Dorsolateral prefrontal cortex (tissue), 120 donors: ENCODE measurements at regions of chr14 and their contacts with region 1.

Region 1: GRCh38 chr14:81710234-81710845 is 176.7 kb upstream of the SEL1L start:
- DNase-seq: peak in 1 of 10 donors; percentile 19
- H3K4me3 ChIP-seq: no peak overlapping the region
- H3K27ac ChIP-seq: no peak overlapping the region
- H3K27me3 ChIP-seq: peaks cover 0 to 2% (median 0%) of the 10 kb centered on the region in 45 donors
- CTCF ChIP-seq: peak; percentile 48 to 85 (median 71)

Region 2: DNA sequence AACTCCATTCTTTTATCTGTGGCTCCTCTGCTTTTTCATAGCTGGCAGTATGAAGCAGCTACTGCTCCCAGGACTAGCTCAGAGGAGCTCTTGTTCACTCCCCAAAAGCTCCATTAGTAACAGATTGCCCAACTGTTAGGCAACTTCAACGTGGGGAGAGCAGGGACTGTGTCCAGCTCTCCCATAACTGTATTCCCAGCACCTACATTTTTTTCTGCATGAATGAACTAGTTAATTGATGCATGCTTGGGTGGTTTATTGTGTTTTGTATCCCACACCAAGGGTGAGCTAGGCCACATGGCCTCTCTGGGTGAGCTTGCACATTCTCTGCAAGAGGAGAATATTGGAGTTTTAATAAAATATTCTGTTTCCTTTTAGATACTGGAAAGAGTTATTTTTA is 325.4 kb before region 1 on chr14:
- intact Hi-C with region 1: no loop called
- DNase-seq: peak in 1 of 10 donors; percentile 22
- H3K4me3 ChIP-seq: no peak overlapping the region
- H3K27ac ChIP-seq: peak overlapping the region in 13 of 59 donors; percentile 4 to 72 (median 50)
- H3K27me3 ChIP-seq: no peaks in the 10 kb centered on the region
- CTCF ChIP-seq: no peak

Region 3: GRCh38 chr14:81638656-81639280 is 71.6 kb before region 1 on chr14:
- intact Hi-C with region 1: no loop called
- DNase-seq: no peak
- H3K4me3 ChIP-seq: no peak overlapping the region
- H3K27ac ChIP-seq: no peak overlapping the region
- H3K27me3 ChIP-seq: no peaks in the 10 kb centered on the region
- CTCF ChIP-seq: no peak

Region 4: DNA sequence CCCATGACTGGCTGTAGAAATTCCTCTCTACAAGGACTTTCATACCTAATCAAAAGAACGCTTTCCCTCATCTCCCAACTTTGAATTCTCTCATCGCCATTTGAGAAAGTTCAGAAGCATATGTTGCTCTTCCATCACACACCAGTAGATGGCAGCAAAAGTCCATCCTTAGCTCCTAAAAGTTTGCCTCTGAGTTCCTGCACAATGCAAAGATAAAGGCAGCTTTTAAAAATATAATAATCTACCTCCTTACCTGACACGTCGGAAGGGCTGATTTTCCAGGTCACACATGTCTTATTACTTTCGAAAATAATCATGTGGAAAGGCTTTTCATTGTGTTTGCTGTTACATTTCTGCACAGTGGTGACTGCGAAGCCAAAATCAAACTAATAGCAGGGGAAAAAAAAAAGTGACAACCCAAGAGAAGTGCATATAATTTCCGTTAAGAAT is 280.0 kb after region 1 on chr14:
- intact Hi-C with region 1: loop called in 1 of 2 experiments (anchors 10 kb)
- DNase-seq: peak in 4 of 10 donors; percentile 13 to 59 (median 34)
- H3K4me3 ChIP-seq: no peak overlapping the region
- H3K27ac ChIP-seq: no peak overlapping the region
- H3K27me3 ChIP-seq: peaks cover 0 to 2% (median 0%) of the 10 kb centered on the region in 45 donors
- CTCF ChIP-seq: peak; percentile 81 to 98 (median 91)